ENCODE measurements at regions of chr15 and their contacts with region 1.

Region 1: GRCh38 chr15:80619680-80620079 is 75.4 kb upstream of the ABHD17C start:
- DNase-seq: no peak
- H3K4me3 ChIP-seq: no peak overlapping the region
- H3K27ac ChIP-seq: no peak overlapping the region
- H3K4me1 ChIP-seq: peaks cover 19% of the 10 kb centered on the region
- H3K27me3 ChIP-seq: no peaks in the 10 kb centered on the region
- CTCF ChIP-seq: no peak
- POLR2A ChIP-seq: no peak

Region 2: DNA sequence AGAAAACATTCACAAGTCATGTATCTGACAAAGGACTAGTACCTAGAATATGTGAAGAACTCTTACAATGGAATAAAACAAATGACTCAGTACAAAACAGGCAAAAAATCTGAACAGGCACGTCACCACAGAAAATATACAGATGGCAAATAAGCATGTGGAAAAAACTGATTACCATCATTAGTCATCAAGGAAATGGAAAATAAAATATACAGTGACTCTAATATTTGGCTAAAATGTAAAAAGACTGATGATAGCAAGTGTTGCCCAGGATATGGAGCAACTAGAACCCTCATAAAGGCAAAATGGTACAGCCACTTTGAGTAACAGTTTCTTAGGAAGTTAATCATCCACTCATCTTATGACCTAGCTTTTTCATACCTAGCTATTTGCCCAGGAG is 20.3 kb before region 1 on chr15:
- CTCF ChIA-PET with region 1: no interaction called
- POLR2A ChIA-PET with region 1: no interaction called
- dilution Hi-C with region 1: no loop called
- intact Hi-C with region 1: loop called (anchors 2 kb)
- DNase-seq: peak; percentile 75
- H3K4me3 ChIP-seq: no peak overlapping the region
- H3K27ac ChIP-seq: no peak overlapping the region
- H3K4me1 ChIP-seq: peaks cover 9% of the 10 kb centered on the region
- H3K27me3 ChIP-seq: no peaks in the 10 kb centered on the region
- CTCF ChIP-seq: no peak
- POLR2A ChIP-seq: no peak

Region 3: GRCh38 chr15:80609512-80609946 is 10.2 kb before region 1 on chr15:
- CTCF ChIA-PET with region 1: interaction called, 17 read pairs
- POLR2A ChIA-PET with region 1: no interaction called
- dilution Hi-C with region 1: no loop called
- intact Hi-C with region 1: loop called (anchors 1 kb)
- DNase-seq: peak; percentile 87
- H3K4me3 ChIP-seq: no peak overlapping the region
- H3K27ac ChIP-seq: no peak overlapping the region
- H3K4me1 ChIP-seq: peaks cover 21% of the 10 kb centered on the region
- H3K27me3 ChIP-seq: no peaks in the 10 kb centered on the region
- CTCF ChIP-seq: no peak
- POLR2A ChIP-seq: no peak

Region 4: GRCh38 chr15:80695104-80695910 is 75.6 kb after region 1 on chr15 and contains the start of gene ABHD17C:
- CTCF ChIA-PET with region 1: interaction called, 5 read pairs
- POLR2A ChIA-PET with region 1: no interaction called
- dilution Hi-C with region 1: no loop called
- intact Hi-C with region 1: loop called (anchors 5 kb)
- DNase-seq: peak; percentile 51
- H3K4me3 ChIP-seq: peak within 1 kb of the TSS; percentile 80 to 96 (median 85)
- H3K27ac ChIP-seq: peak within 1 kb of the TSS; percentile 60
- H3K4me1 ChIP-seq: peaks cover 16% of the 10 kb centered on the region
- H3K27me3 ChIP-seq: no peaks in the 10 kb centered on the region
- CTCF ChIP-seq: no peak
- POLR2A ChIP-seq: peak; percentile 64
- total RNA-seq, gene ABHD17C: 8.2 and 10.9 TPM in 2 replicates

Measured in endothelial cell of umbilical vein (primary cell).